Esophagus muscularis mucosa (tissue), 4 donors: ENCODE measurements at regions of chr1 and their contacts with region 1.

Region 1: GRCh38 chr1:167059045-167059808 is 30.9 kb downstream of the GPA33 start:
- DNase-seq: peak; percentile 92
- H3K4me3 ChIP-seq: no peak overlapping the region
- H3K27ac ChIP-seq: no peak overlapping the region
- H3K4me1 ChIP-seq: peaks cover 0 to 10% (median 7%) of the 10 kb centered on the region in 4 donors
- H3K27me3 ChIP-seq: peaks cover 0 to 12% (median 4%) of the 10 kb centered on the region in 4 donors
- CTCF ChIP-seq: peak; percentile 89 to 98 (median 97)
- EP300 ChIP-seq: no peak
- POLR2A ChIP-seq: no peak

Region 2: GRCh38 chr1:166910396-166910994 is 148.7 kb before region 1 on chr1:
- intact Hi-C with region 1: loop called (anchors 2 kb)
- DNase-seq: no peak
- H3K4me3 ChIP-seq: no peak overlapping the region
- H3K27ac ChIP-seq: no peak overlapping the region
- H3K4me1 ChIP-seq: no peaks in the 10 kb centered on the region
- H3K27me3 ChIP-seq: no peaks in the 10 kb centered on the region
- CTCF ChIP-seq: peak; percentile 73 to 75 (median 75)
- EP300 ChIP-seq: no peak
- POLR2A ChIP-seq: no peak

Region 3: GRCh38 chr1:166925810-166926478 is 133.3 kb before region 1 on chr1:
- intact Hi-C with region 1: no loop called
- DNase-seq: no peak
- H3K4me3 ChIP-seq: no peak overlapping the region
- H3K27ac ChIP-seq: no peak overlapping the region
- H3K4me1 ChIP-seq: peaks cover 7 to 15% (median 9%) of the 10 kb centered on the region in 4 donors
- H3K27me3 ChIP-seq: peaks cover 0 to 8% (median 0%) of the 10 kb centered on the region in 4 donors
- CTCF ChIP-seq: no peak
- EP300 ChIP-seq: no peak
- POLR2A ChIP-seq: no peak

Region 4: DNA sequence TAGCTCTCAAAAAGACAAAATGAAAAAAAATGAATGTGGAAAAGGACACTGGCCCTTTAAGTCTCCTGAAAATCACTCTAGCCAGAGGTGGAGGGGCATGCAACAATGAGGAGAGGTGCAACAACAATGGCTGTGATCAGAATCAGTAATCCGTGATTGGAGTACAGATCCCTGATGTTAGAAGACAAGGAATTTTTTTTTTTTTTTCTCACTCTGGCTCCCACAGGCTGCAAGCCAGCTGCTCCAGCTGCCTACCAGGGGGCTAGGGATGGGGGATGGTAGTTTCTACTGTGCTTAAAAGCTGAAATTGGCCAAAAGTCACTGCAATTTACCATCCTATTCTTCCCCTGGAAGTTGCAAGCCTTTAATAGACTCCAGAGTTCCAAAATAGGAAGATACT is 89.2 kb after region 1 on chr1:
- intact Hi-C with region 1: no loop called
- DNase-seq: peak; percentile 21
- H3K4me3 ChIP-seq: no peak overlapping the region
- H3K27ac ChIP-seq: no peak overlapping the region
- H3K4me1 ChIP-seq: peaks cover 0 to 13% (median 10%) of the 10 kb centered on the region in 4 donors
- H3K27me3 ChIP-seq: no peaks in the 10 kb centered on the region
- CTCF ChIP-seq: no peak
- EP300 ChIP-seq: no peak
- POLR2A ChIP-seq: no peak